Psoas muscle (tissue), 8 donors: ENCODE measurements at regions of chr2 and their contacts with region 1.

Region 1: DNA sequence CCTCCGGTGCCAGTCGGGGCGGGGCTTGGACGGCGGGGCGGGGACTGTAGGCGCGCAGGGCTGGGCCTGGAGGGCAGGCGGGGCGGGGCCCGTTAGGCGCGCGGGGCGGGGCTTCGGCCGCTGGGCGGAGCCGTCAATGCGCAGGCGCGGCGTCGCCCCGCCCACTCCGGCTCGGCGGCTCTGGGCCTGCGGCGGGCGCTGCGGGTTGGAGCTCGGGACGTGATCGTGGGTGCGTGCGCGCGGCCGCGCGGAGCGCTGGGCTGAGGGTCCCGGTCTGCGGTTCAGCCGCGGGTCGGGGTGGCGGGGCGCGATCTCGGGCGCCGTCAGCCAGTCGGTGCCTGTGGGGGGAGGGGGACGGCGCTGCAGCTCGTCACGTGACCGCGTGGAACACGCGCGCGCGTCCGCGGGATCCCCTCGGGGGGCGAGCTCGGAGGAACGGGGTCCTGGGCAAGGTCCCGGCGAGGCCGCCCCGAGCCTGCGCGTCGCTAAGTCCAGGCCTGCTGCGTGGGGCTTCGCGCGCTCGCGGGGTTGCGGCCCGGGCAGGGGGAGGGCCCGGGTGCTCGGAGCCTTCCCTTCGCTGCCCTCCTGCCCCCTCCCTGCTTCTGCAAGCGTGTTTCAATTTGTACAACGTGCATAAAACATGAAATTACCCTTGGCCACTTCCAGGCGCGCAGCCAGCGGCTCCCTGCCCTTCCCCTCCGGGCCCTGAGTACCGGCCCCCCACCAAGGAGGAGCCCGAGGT is at the start of gene D2HGDH:
- DNase-seq: peak; percentile 95 to 97
- ATAC-seq: peak; percentile 93 to 96 (median 94)
- H3K4me3 ChIP-seq: peak within 1 kb of the TSS; percentile 92
- H3K27ac ChIP-seq: peak within 1 kb of the TSS; percentile 89
- H3K4me1 ChIP-seq: peaks cover 4% of the 10 kb centered on the region
- H3K27me3 ChIP-seq: no peaks in the 10 kb centered on the region
- CTCF ChIP-seq: no peak
- total RNA-seq, gene D2HGDH: 20.3 to 31.0 (median 23.6) TPM

Region 2: DNA sequence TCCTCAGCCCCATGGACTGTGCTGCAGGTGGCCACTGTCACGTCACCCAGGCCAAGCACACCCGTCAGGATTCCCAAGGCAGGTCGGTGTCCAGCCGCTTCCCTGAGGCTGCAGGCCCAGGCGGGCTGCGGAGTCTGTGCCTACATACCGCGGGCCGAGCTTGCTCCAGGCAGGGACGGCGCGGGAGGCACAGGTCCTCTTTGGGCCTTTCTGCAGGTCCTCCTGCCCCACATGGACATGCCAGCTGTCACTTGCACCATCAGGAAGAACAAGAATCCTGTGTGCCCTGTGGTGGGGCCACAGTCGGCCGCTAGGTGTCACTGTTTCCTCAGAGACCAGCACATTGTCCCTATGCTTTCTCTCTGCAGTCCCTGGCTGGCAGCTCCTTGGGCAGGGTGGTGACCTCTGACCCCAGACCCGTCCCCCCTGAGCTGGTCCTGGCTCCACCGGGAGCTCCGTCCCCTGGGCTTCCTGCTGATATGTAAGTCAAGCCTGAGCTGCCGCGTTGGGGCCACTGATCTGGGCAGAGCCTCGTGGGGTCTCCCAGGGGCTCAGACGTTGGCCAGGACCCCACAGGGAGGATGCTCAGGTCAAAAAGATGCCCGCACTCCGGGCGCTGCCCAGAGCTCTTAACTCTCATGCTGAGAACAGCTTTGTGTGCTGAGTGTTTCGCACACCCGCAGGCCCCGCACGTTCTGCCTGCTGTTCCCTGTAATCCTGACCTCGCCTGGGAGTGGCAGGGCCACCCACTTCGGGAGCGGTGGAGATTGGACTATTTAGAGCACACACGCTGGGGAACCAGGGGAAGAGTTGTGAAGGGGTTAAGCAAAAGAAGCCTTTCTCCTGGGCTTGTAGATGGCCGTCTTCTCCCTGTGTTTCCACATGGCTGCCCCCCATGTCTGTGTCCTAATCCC is 883.3 kb before region 1 on chr2:
- intact Hi-C with region 1: loop called in 1 of 2 experiments (anchors 10 kb)
- DNase-seq: peak; percentile 87 to 91
- ATAC-seq: peak; percentile 96 to 100 (median 98)
- H3K4me3 ChIP-seq: no peak overlapping the region
- H3K27ac ChIP-seq: no peak overlapping the region
- H3K4me1 ChIP-seq: no peaks in the 10 kb centered on the region
- H3K27me3 ChIP-seq: no peaks in the 10 kb centered on the region
- CTCF ChIP-seq: peak; percentile 95

Region 3: DNA sequence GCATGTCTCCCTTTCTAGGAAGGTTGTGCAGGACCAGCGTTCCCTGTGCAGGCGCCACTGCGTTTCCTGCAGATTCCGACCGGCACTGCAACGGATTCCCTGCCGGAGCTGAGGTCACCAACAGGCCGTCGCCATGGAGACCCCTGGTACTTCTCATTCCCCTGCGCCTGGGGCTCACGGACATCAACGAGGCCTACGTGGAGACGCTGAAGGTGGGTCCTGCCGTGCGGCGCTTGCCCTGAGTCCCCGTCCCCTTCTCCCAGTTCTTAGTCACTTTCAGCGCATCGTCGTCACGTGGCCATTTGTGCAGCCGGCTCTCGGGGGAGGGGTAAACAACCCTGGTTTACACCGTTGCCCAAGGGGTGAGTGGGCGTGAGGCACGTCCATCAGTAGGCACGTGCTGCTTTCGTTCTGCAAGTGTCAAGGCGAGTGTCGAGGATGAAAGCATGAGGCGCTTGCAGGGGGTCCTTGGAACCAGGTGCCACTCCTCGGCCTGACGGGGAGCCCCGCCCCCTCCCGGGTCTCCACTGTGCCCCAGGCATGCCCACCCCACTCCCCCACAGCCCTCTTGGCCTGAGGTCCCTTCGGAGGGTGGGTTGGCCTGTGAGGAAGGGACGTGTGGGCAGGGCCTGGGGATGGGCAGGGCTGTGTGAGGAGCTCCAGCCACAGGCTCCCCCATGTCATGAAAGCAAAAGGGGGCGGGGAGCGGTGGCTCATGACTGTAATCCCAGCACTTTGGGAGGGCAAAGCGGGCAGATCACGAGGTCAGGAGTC is 67.8 kb before region 1 on chr2:
- intact Hi-C with region 1: loop called in 1 of 2 experiments (anchors 5 kb)
- DNase-seq: no peak
- ATAC-seq: no peak
- H3K4me3 ChIP-seq: no peak overlapping the region
- H3K27ac ChIP-seq: no peak overlapping the region
- H3K4me1 ChIP-seq: no peaks in the 10 kb centered on the region
- H3K27me3 ChIP-seq: no peaks in the 10 kb centered on the region
- CTCF ChIP-seq: no peak

Region 4: GRCh38 chr2:241686649-241687425 is 47.8 kb before region 1 on chr2 and contains the start of gene DTYMK:
- intact Hi-C with region 1: loop called in 1 of 2 experiments (anchors 5 kb)
- DNase-seq: peak; percentile 98
- ATAC-seq: peak; percentile 97 to 99 (median 98)
- H3K4me3 ChIP-seq: peak within 1 kb of the TSS; percentile 98
- H3K27ac ChIP-seq: peak within 1 kb of the TSS; percentile 98
- H3K4me1 ChIP-seq: peaks cover 30% of the 10 kb centered on the region
- H3K27me3 ChIP-seq: no peaks in the 10 kb centered on the region
- CTCF ChIP-seq: no peak
- total RNA-seq, gene DTYMK: 6.4 to 8.5 (median 6.7) TPM

Region 5: GRCh38 chr2:241877989-241878970 is 143.6 kb after region 1 on chr2:
- intact Hi-C with region 1: loop called in 1 of 2 experiments (anchors 5 kb)
- DNase-seq: peak; percentile 79 to 85
- ATAC-seq: peak in 3 of 4 donors; percentile 45 to 50 (median 48)
- H3K4me3 ChIP-seq: no peak overlapping the region
- H3K27ac ChIP-seq: no peak overlapping the region
- H3K4me1 ChIP-seq: peaks cover 10% of the 10 kb centered on the region
- H3K27me3 ChIP-seq: peaks cover 0 to 2% (median 0%) of the 10 kb centered on the region in 3 donors
- CTCF ChIP-seq: peak; percentile 59